ENCODE measurements at regions of chr20 and their contacts with region 1.

Region 1: DNA sequence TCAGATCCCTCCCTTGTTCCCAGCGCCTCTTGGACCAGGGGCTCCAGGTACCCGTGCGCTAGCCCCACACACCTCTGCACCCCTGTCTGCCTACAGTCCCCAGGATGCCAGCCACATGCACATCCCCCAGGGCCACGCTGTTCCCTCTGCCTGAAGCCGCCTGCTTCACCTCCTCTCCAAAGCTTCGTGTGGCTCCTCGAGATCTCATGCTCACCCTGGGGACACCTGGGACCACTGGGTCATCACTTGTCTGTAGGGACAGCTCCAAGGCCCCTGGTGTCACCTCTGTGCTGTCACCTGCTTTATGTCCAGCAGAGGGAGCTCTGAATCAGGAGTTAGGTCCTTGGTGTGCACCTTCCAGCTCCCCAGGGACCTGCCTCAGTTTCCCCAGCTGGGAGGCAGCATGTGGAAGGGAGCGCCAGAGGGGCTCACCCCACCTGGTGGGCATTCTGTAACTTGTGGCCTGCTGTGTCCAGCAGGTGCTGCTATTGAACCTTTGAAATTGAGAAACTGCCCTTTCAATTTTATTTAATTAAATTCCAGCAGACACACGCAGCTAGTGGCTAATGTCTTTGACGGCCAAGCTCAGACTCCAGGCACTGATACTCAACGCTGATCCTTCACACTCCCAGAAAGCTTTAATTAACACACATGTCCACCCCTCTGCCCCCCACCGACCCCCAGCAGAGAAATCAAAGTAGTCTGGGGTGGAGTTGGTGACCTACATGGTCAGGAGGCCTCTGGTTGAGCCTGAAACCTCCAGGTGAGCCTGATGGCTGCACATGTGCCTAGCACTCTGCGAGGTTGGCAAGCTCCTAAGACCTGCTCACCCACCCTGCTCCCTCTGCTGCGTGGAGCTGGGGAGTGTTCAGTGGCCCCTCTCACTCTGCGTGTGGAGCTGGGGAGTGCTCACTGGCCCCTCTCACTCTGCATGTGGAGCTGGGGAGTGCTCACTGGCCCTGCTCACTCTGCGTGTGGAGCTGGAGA is 7.6 kb upstream of the YTHDF1 start:
- DNase-seq: peak; percentile 66
- CTCF ChIP-seq: peak; percentile 78

Region 2: DNA sequence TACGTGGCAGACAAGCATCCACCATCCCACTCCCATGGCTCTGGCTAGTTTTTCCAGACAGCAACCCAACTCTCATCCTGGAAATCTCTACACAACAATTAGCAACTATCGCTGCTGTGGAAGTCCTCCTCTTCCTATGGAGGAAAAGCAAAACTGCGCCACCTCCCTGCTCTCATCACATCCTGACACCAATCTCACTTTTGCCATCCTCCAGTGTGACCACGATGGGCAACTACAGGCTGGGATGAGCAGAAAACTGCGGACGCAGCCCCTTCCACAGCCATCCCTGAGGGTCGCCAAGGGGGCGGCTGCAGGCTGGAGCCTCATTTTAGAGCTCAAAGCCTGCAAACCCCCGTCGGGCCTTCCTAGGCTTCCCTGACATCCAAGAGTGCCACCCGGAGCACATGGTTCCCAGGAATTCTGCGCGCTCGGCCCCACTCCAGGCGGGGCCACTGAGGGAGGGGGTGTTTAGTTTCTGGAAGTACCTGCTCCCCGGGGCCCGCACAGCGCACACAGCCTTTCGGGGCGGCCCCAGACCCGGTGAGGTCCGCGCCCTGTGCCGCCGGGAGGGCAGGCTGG is 363.1 kb before region 1 on chr20:
- CTCF ChIA-PET with region 1: no interaction called
- POLR2A ChIA-PET with region 1: no interaction called
- DNase-seq: no peak
- CTCF ChIP-seq: no peak

Region 3: GRCh38 chr20:63196768-63197470 is 26.6 kb before region 1 on chr20:
- CTCF ChIA-PET with region 1: interaction called, 23 read pairs
- POLR2A ChIA-PET with region 1: no interaction called
- DNase-seq: no peak
- CTCF ChIP-seq: no peak

Region 4: GRCh38 chr20:63246490-63247288 is 23.2 kb after region 1 on chr20:
- CTCF ChIA-PET with region 1: interaction called, 19 read pairs
- POLR2A ChIA-PET with region 1: no interaction called
- DNase-seq: no peak
- CTCF ChIP-seq: no peak

Region 5: DNA sequence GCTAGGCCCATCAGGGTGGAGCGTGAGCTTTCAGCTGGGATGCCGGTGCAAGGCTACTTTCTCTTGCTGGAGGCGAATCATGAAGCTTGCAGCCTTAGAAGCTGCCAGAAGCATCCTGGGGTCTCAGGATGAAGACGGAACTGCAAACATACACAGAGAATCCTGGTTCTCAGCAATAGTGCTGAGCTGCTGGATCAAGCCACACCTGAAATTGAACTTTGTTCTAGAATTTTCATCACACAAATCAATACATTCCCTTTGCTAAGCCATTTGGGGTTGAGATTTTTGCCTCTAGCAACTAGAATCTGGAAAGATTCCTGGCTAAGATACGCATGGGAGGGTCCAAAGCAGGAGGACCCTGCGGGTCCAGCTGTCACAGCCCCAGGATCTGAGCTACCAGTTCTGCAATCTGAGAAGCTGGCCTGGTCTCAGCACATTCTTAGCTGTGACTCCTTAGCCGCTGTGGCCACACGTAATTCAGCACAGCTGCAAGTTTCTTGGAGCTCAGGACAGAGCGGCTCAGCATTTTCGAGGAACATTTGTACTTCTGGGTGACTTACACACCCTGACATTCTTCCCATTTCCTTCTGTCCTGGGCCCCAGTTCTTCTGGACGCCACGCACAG is 42.5 kb after region 1 on chr20:
- CTCF ChIA-PET with region 1: interaction called, 19 read pairs
- POLR2A ChIA-PET with region 1: no interaction called
- DNase-seq: no peak
- CTCF ChIP-seq: no peak

Region 6: GRCh38 chr20:63381807-63382322 is 158.4 kb after region 1 on chr20:
- CTCF ChIA-PET with region 1: interaction called, 35 read pairs
- POLR2A ChIA-PET with region 1: no interaction called
- DNase-seq: peak; percentile 77
- CTCF ChIP-seq: peak; percentile 82